Activated CD8-positive, alpha-beta T cell treated with anti-CD3 and anti-CD28 coated beads, Interleukin-2, amount 10 ng/mL, durations not matched to agents 7 days and 5 days (primary cell): ENCODE measurements at regions of chr9 and their contacts with region 1.

Region 1: GRCh38 chr9:133992780-133993634 is 883 bp upstream of the VAV2 start:
- DNase-seq: peak; percentile 79
- ATAC-seq: peak; percentile 77
- H3K4me3 Mint-ChIP-seq: peak overlapping the region; percentile 65
- H3K27ac Mint-ChIP-seq: peak overlapping the region; percentile 66
- H3K4me1 Mint-ChIP-seq: peaks cover 5% of the 10 kb centered on the region
- H3K27me3 Mint-ChIP-seq: peaks cover 7% of the 10 kb centered on the region

Region 2: DNA sequence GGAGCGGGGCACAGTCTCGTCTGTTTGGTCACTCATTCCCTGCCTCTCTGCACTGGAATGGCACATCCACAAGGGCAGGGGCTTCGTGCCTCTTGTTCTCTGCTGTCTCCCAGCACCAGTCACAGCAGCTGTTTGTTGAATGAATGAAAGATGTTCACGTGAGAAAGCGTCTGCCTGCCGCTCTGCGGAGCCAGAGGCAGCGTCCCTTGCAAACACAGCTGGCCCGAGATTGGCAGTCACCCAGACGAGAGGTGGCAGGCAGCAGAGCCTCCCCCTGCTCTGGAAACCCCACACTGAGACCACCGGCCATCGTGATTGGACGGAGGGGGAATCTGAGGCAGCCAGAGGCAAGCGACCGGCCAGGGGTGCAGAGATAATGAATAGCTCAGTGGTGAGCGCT is 377.8 kb before region 1 on chr9:
- CTCF ChIA-PET with region 1: no interaction called
- POLR2A ChIA-PET with region 1: no interaction called
- DNase-seq: no peak
- ATAC-seq: no peak
- H3K4me3 Mint-ChIP-seq: no peak overlapping the region
- H3K27ac Mint-ChIP-seq: no peak overlapping the region
- H3K4me1 Mint-ChIP-seq: peaks cover 12% of the 10 kb centered on the region
- H3K27me3 Mint-ChIP-seq: peaks cover 27% of the 10 kb centered on the region

Region 3: GRCh38 chr9:133782157-133783130 is 210.6 kb before region 1 on chr9:
- CTCF ChIA-PET with region 1: interaction called, 135 read pairs
- POLR2A ChIA-PET with region 1: interaction called, 10 read pairs
- DNase-seq: peak; percentile 80
- ATAC-seq: peak; percentile 64
- H3K4me3 Mint-ChIP-seq: no peak overlapping the region
- H3K27ac Mint-ChIP-seq: no peak overlapping the region
- H3K4me1 Mint-ChIP-seq: peaks cover 16% of the 10 kb centered on the region
- H3K27me3 Mint-ChIP-seq: no peaks in the 10 kb centered on the region

Region 4: GRCh38 chr9:133792721-133793470 is 200.1 kb before region 1 on chr9:
- CTCF ChIA-PET with region 1: interaction called, 91 read pairs
- POLR2A ChIA-PET with region 1: interaction called, 3 read pairs
- DNase-seq: peak; percentile 60
- ATAC-seq: peak; percentile 71
- H3K4me3 Mint-ChIP-seq: no peak overlapping the region
- H3K27ac Mint-ChIP-seq: no peak overlapping the region
- H3K4me1 Mint-ChIP-seq: peaks cover 7% of the 10 kb centered on the region
- H3K27me3 Mint-ChIP-seq: no peaks in the 10 kb centered on the region

Region 5: GRCh38 chr9:133955821-133956411 is 37.1 kb before region 1 on chr9:
- CTCF ChIA-PET with region 1: interaction called, 14 read pairs
- POLR2A ChIA-PET with region 1: no interaction called
- DNase-seq: peak; percentile 58
- ATAC-seq: peak; percentile 81
- H3K4me3 Mint-ChIP-seq: peak overlapping the region; percentile 31
- H3K27ac Mint-ChIP-seq: peak overlapping the region; percentile 86
- H3K4me1 Mint-ChIP-seq: peaks cover 18% of the 10 kb centered on the region
- H3K27me3 Mint-ChIP-seq: no peaks in the 10 kb centered on the region

Region 6: GRCh38 chr9:134014946-134015345 is 21.9 kb after region 1 on chr9:
- CTCF ChIA-PET with region 1: interaction called, 10 read pairs
- POLR2A ChIA-PET with region 1: no interaction called
- DNase-seq: no peak
- ATAC-seq: no peak
- H3K4me3 Mint-ChIP-seq: no peak overlapping the region
- H3K27ac Mint-ChIP-seq: no peak overlapping the region
- H3K4me1 Mint-ChIP-seq: no peaks in the 10 kb centered on the region
- H3K27me3 Mint-ChIP-seq: no peaks in the 10 kb centered on the region

Region 7: GRCh38 chr9:134024828-134025605 is 32.0 kb after region 1 on chr9 and contains the start of gene BRD3OS:
- CTCF ChIA-PET with region 1: interaction called, 13 read pairs
- POLR2A ChIA-PET with region 1: interaction called, 4 read pairs
- DNase-seq: peak; percentile 95
- ATAC-seq: peak; percentile 88
- H3K4me3 Mint-ChIP-seq: peak within 1 kb of the TSS; percentile 79
- H3K27ac Mint-ChIP-seq: peak within 1 kb of the TSS; percentile 70
- H3K4me1 Mint-ChIP-seq: peaks cover 16% of the 10 kb centered on the region
- H3K27me3 Mint-ChIP-seq: no peaks in the 10 kb centered on the region
- total RNA-seq, gene BRD3OS: 13.5 to 16.0 TPM